ENCODE measurements at regions of chr14 and their contacts with region 1.

Region 1: DNA sequence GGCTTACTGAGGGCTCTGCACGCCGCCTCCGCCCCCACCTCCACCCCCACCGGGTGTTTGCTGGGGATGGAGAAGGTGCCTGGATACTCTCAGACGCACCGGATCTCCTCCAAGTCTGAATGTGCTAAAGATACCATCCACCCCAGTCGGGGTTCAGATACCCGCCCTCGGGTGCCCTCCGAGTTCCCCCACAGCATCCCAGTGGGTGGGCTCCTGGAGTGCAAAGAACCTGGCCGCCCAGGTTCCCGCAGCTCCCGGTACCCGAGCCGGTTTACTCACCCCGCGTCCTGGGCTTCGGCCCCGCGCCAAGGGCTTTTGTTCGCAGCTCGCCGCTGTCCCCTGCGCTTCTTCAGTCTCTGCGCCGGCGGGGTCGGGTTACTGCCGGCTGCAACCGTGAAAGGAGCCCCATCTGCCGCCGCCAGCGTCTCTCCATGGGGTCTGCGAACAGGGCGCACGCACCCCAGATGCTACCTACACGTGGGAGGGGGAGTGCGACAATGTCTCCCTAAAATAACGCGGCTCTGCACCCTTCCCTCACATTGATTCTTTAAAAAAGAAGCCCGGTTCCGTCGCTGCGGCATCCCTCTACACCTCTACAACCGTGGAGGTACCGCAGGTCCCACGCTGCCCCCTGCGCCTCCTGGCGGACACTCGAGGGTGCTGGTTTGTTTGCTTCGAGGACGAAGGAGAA is at the start of gene CCDC177:
- DNase-seq: peak; percentile 81
- H3K4me3 Mint-ChIP-seq: peak within 1 kb of the TSS; percentile 68
- H3K27ac Mint-ChIP-seq: no peak within 1 kb of the TSS
- H3K4me1 Mint-ChIP-seq: peaks cover 10% of the 10 kb centered on the region
- H3K27me3 Mint-ChIP-seq: peaks cover 43% of the 10 kb centered on the region
- total RNA-seq, gene CCDC177: not detected

Region 2: DNA sequence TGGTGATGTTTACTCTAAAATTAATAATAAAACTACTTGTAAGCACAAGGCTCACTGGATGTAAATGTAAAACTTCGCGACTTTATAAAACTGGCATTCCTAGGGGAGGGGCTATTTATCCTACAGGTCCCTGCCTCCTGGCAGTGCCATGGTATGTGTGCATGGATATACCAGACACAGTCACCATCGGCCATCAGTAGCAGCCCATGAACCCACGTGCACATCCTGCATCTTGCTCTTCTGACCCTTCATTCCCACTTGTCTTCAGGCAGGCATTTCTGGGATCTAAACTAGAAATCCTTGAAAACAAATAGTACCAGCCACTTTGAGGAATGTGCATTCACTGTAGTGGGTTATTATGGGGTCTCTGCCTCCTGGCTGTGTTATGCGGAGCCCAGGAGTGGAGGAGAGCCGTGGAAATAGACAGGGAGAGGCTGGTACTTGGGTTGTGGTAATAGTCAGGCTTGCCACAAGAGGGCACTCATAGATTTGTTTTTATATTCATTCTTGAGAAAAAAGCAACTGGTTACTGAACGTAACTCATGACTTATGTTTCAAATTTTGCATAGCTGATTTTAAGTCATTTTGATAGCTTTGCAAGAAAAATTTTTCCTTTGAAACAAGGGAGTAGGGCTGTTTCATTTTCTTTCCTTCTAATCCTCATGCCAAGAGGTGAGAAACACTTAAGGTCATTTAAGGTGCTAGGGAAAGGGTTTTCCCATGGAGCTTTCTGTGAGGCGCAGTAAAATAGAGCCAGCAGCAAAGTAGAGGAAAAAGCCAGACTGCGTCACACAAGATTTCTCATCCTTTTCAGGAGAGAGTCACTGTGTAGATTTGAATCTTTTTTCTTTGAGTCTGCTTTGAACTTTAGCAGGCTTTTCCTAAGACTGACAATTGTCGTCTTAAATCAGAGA is 331.8 kb before region 1 on chr14:
- CTCF ChIA-PET with region 1: interaction called, 8 read pairs
- intact Hi-C with region 1: loop called (anchors 1 kb)
- DNase-seq: peak; percentile 77
- H3K4me3 Mint-ChIP-seq: no peak overlapping the region
- H3K27ac Mint-ChIP-seq: no peak overlapping the region
- H3K4me1 Mint-ChIP-seq: peaks cover 2% of the 10 kb centered on the region
- H3K27me3 Mint-ChIP-seq: no peaks in the 10 kb centered on the region

Region 3: DNA sequence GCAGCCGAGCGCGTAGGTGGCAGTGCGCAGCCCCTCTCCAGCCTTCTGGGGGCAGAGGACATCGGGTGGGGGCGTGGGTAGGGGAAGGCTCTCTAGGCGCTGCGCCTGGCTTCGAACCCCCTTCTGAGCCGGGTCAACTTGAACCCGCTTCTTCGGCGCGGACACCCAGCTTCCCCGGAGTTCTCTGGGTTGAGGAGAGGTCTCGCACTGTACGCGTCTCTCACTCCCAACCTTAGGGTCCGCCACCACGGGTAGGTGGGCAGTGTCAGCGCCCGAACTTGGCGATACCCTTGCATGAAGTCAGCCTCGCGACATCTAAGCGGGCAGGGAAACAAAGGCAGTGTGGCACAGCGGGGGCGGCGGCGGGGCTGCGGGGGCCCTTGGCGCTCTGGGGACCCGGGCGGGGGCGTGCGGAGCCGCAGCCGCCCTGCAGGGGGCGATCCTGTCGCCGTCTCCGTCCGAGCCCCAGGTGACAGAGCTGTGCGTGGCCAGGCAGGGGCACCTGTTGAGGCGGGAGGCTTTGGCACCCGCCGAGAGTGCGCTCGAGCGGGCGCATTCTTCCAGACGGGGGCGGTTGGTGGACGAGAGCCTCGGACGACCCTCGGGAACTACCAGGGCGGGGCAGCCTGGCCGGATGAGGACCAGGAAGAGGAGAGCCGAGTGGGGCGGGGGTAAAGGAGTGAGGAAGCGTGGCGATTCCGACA is 313.4 kb before region 1 on chr14:
- CTCF ChIA-PET with region 1: no interaction called
- intact Hi-C with region 1: loop called (anchors 1 kb)
- DNase-seq: peak; percentile 60
- H3K4me3 Mint-ChIP-seq: peak overlapping the region; percentile 63
- H3K27ac Mint-ChIP-seq: no peak overlapping the region
- H3K4me1 Mint-ChIP-seq: peaks cover 6% of the 10 kb centered on the region
- H3K27me3 Mint-ChIP-seq: peaks cover 51% of the 10 kb centered on the region

Region 4: DNA sequence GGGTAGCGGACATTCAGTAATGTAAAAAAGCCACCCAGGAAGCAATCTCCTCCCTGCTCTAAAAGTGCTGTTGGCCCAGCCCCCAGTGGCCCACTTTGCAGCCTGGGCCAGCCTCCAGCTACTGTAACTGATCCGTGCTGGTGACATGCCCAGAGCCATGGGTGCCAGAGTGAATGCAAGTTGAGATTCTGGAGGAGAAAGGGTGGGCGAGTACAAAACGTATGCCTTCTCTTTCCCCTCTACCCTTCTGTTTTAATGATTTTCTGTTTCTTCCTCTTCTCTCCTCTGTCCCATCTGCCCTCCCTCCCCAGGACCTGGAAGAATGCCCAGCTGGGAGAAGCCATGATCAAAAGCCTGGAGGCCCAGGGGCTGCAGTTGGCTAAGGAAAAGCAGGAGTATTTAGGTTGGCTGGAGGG is 73.0 kb before region 1 on chr14:
- CTCF ChIA-PET with region 1: interaction called, 6 read pairs
- intact Hi-C with region 1: loop called (anchors 5 kb)
- DNase-seq: no peak
- H3K4me3 Mint-ChIP-seq: no peak overlapping the region
- H3K27ac Mint-ChIP-seq: no peak overlapping the region
- H3K4me1 Mint-ChIP-seq: no peaks in the 10 kb centered on the region
- H3K27me3 Mint-ChIP-seq: no peaks in the 10 kb centered on the region

Region 5: GRCh38 chr14:69547701-69548348 is 26.6 kb before region 1 on chr14:
- CTCF ChIA-PET with region 1: interaction called, 16 read pairs
- intact Hi-C with region 1: loop called (anchors 1 kb)
- DNase-seq: peak; percentile 18
- H3K4me3 Mint-ChIP-seq: no peak overlapping the region
- H3K27ac Mint-ChIP-seq: no peak overlapping the region
- H3K4me1 Mint-ChIP-seq: peaks cover 6% of the 10 kb centered on the region
- H3K27me3 Mint-ChIP-seq: peaks cover 44% of the 10 kb centered on the region